CD8-positive, alpha-beta T cell (primary cell): ENCODE measurements at regions of chr10 and their contacts with region 1.

Region 1: GRCh38 chr10:14837757-14838581 is at the starts of genes CDNF, HSPA14 and MSANTD7:
- DNase-seq: peak; percentile 98 to 100 (median 99)
- ATAC-seq: peak; percentile 95
- H3K4me3 ChIP-seq: peak within 1 kb of the TSS; percentile 90 to 96
- H3K4me3 Mint-ChIP-seq: peak within 1 kb of the TSS; percentile 98
- H3K27ac ChIP-seq: peak within 1 kb of the TSS; percentile 86 to 94
- H3K27ac Mint-ChIP-seq: peak within 1 kb of the TSS; percentile 99
- H3K4me1 ChIP-seq: peaks cover 17% of the 10 kb centered on the region
- H3K4me1 Mint-ChIP-seq: peaks cover 32% of the 10 kb centered on the region
- H3K27me3 ChIP-seq: no peaks in the 10 kb centered on the region
- H3K27me3 Mint-ChIP-seq: no peaks in the 10 kb centered on the region
- CTCF ChIP-seq: no peak
- total RNA-seq, gene CDNF: 2.3 to 2.5 TPM
- total RNA-seq, gene HSPA14: 37.7 to 37.8 TPM
- total RNA-seq, gene MSANTD7: 20.2 to 22.3 TPM

Region 2: GRCh38 chr10:13586676-13587355 is 1251.2 kb before region 1 on chr10 and contains the start of gene PRPF18:
- CTCF ChIA-PET with region 1: no interaction called
- POLR2A ChIA-PET with region 1: no interaction called
- intact Hi-C with region 1: loop called in 1 of 2 experiments (anchors 10 kb)
- DNase-seq: peak; percentile 92 to 97 (median 95)
- ATAC-seq: peak; percentile 99
- H3K4me3 ChIP-seq: peak within 1 kb of the TSS; percentile 97
- H3K4me3 Mint-ChIP-seq: peak within 1 kb of the TSS; percentile 100
- H3K27ac ChIP-seq: peak within 1 kb of the TSS; percentile 69 to 73
- H3K27ac Mint-ChIP-seq: peak within 1 kb of the TSS; percentile 99
- H3K4me1 ChIP-seq: peaks cover 16% of the 10 kb centered on the region
- H3K4me1 Mint-ChIP-seq: peaks cover 41% of the 10 kb centered on the region
- H3K27me3 ChIP-seq: peaks cover 3 to 4% of the 10 kb centered on the region in 2 experiments
- H3K27me3 Mint-ChIP-seq: peaks cover 18% of the 10 kb centered on the region
- CTCF ChIP-seq: peak; percentile 96
- total RNA-seq, gene PRPF18: 29.4 to 29.6 TPM

Region 3: DNA sequence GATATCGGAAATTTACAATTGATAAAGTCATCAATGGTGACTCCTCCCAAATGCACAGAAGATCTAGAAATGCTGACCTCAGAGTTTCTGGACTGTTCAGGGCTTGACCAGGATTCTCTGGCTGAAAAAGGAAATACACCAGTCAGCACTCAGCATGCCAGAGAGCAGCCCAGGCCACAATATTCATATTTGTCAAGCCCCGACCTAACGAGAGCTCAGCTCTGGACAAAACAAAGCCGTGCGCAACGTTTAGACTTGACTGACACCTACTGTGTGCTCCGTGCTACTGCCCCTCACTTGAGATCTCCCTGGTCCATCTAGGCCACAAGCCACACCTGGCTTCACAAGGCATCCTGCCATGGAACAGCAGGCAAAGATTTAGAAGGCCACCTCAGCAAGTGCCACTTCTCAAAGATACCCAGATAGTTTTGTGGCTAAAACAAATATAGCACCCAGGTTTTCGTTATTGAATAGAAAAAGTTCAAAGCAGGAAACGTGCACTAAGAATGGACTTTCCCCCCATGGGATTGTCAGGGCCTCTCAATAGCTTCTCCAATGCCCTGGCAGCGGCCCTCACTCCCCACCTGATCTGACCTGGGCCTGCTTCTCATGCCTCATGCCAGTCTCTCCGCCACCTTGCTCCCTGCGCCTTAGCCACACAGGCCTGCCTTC is 281.5 kb before region 1 on chr10:
- CTCF ChIA-PET with region 1: interaction called, 5 read pairs
- POLR2A ChIA-PET with region 1: interaction called, 3 read pairs
- intact Hi-C with region 1: loop called in 1 of 2 experiments (anchors 5 kb)
- DNase-seq: peak in 4 of 9 experiments; percentile 5 to 76 (median 56)
- ATAC-seq: peak; percentile 24
- H3K4me3 ChIP-seq: no peak overlapping the region
- H3K4me3 Mint-ChIP-seq: peak overlapping the region; percentile 27
- H3K27ac ChIP-seq: peak overlapping the region in 1 of 2 experiments; percentile 82
- H3K27ac Mint-ChIP-seq: peak overlapping the region; percentile 86
- H3K4me1 ChIP-seq: peaks cover 98% of the 10 kb centered on the region
- H3K4me1 Mint-ChIP-seq: peaks cover 93% of the 10 kb centered on the region
- H3K27me3 ChIP-seq: no peaks in the 10 kb centered on the region
- H3K27me3 Mint-ChIP-seq: no peaks in the 10 kb centered on the region
- CTCF ChIP-seq: no peak

Region 4: GRCh38 chr10:14604181-14605142 is 233.5 kb before region 1 on chr10:
- CTCF ChIA-PET with region 1: no interaction called
- POLR2A ChIA-PET with region 1: interaction called, 3 read pairs
- intact Hi-C with region 1: loop called (anchors 1 to 2 kb)
- DNase-seq: peak; percentile 39 to 86 (median 73)
- ATAC-seq: peak; percentile 71
- H3K4me3 ChIP-seq: peak overlapping the region; percentile 55 to 66
- H3K4me3 Mint-ChIP-seq: peak overlapping the region; percentile 93
- H3K27ac ChIP-seq: peak overlapping the region; percentile 48
- H3K27ac Mint-ChIP-seq: peak overlapping the region; percentile 94
- H3K4me1 ChIP-seq: peaks cover 44% of the 10 kb centered on the region
- H3K4me1 Mint-ChIP-seq: peaks cover 50% of the 10 kb centered on the region
- H3K27me3 ChIP-seq: no peaks in the 10 kb centered on the region
- H3K27me3 Mint-ChIP-seq: no peaks in the 10 kb centered on the region
- CTCF ChIP-seq: peak; percentile 16

Region 5: DNA sequence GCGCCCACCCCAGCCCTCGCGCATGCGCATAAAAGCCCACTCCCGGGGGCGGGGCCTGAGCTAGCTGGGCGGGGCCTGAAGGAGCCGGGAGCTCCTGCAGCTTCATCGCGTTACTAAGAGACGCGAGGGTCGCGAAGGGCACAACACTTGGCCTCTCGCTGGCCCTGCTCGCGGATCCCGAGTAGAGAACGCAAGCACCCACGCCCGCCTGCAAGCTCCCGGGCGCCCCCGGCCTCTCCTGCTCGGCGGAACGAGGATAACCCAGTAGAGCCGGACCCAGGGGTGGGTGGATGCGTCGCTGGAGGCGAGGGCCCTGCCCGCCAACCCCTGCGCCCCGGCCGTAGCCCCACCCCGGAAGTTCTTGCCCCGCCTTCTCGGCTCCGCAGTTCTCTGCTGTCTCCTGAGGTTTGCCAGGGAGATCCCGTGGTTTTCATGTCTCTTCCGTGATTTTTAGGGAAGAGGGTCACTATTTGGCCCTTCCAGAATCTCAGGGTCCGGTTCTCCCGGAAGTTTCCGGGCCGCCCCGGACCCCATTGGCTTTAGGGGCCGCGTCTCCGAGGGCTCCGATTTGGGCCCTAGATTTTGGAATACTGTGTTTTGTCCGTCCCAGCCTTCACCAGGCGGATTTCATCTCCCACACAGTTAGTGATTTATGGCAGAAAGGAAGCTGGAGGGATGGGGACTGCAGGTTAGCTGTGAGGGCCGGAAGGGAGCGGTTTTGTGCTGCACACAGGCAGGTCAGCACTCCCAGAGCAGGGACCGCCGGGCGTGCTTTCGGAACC is 121.5 kb after region 1 on chr10 and contains the start of gene MEIG1:
- CTCF ChIA-PET with region 1: no interaction called
- POLR2A ChIA-PET with region 1: interaction called, 14 read pairs
- intact Hi-C with region 1: loop called (anchors 1 to 2 kb)
- DNase-seq: peak; percentile 79 to 98 (median 92)
- ATAC-seq: peak; percentile 83
- H3K4me3 ChIP-seq: peak within 1 kb of the TSS; percentile 77 to 95
- H3K4me3 Mint-ChIP-seq: peak within 1 kb of the TSS; percentile 97
- H3K27ac ChIP-seq: peak within 1 kb of the TSS; percentile 86 to 88
- H3K27ac Mint-ChIP-seq: peak within 1 kb of the TSS; percentile 95
- H3K4me1 ChIP-seq: peaks cover 11% of the 10 kb centered on the region
- H3K4me1 Mint-ChIP-seq: peaks cover 24% of the 10 kb centered on the region
- H3K27me3 ChIP-seq: no peaks in the 10 kb centered on the region
- H3K27me3 Mint-ChIP-seq: no peaks in the 10 kb centered on the region
- CTCF ChIP-seq: no peak
- total RNA-seq, gene MEIG1: not detected

Region 6: DNA sequence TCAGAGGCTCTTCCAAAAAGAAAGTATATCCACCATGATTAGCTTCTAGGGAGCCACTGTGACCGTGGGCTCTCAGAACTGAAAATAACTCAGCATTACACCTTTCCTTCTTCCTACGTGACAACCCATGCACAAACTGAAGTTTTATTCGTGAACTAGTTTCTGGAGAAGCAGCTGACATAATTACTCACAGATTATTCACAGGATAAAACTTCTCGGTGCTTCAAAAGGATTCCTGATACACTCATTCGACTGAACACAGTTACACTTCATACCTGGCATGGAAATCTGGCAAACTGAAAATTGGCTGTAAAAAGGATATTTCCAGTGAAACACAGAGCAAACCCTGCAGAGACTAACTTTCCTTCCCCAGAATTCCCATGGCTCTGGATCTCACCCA is 1459.7 kb after region 1 on chr10:
- CTCF ChIA-PET with region 1: no interaction called
- POLR2A ChIA-PET with region 1: no interaction called
- intact Hi-C with region 1: no loop called
- DNase-seq: no peak
- ATAC-seq: no peak
- H3K4me3 ChIP-seq: no peak overlapping the region
- H3K4me3 Mint-ChIP-seq: no peak overlapping the region
- H3K27ac ChIP-seq: no peak overlapping the region
- H3K27ac Mint-ChIP-seq: no peak overlapping the region
- H3K4me1 ChIP-seq: no peaks in the 10 kb centered on the region
- H3K4me1 Mint-ChIP-seq: no peaks in the 10 kb centered on the region
- H3K27me3 ChIP-seq: no peaks in the 10 kb centered on the region
- H3K27me3 Mint-ChIP-seq: peaks cover 6% of the 10 kb centered on the region
- CTCF ChIP-seq: no peak